Dendritic cell treated with granulocyte-macrophage colony-stimulating factor and Interleukin-4, amounts not matched to agents 40 ng/mL and 50 ng/mL, for 4 days (primary cell): ENCODE measurements at regions of chr3 and their contacts with region 1.

Region 1: DNA sequence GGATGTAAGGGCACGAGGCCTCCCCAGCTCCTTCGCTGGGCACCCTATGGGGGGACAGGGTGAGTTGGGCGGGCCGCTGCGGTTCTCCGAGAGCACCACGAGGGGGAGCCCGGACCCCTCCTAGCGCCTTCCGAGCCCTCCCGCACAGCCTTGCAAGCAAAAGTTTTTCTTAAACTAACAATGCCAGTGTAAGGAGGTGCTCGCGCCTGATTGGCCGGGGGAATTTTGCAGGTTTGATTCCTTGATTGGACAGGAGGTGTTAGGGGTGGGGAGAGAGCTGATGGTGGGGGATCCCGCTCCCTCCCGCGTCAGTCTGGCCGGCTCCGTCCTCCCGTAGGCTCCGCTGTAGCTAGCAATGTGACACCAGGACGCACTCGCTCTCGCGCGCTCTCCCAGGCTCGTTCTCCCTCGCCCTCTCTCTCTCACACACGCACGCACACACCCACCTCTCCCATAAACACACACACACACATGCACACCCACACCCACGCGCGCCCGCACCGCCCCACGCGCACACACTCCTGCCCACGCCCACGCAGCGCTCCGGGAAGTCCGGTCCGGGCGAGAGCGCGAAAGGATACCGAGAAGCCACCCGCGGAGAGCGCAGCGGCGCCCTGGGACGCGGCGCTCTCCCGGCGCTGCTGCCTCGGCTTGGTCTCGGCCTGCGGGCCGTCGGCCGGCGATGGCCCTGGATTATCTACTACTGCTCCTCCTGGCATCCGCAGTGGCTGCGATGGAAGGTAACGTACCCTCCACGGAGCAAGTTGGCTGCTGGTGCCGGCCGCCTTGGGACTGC is at the start of gene EPHB1:
- H3K4me3 Mint-ChIP-seq: peak within 1 kb of the TSS; percentile 75
- H3K27ac Mint-ChIP-seq: no peak within 1 kb of the TSS
- H3K4me1 Mint-ChIP-seq: peaks cover 17% of the 10 kb centered on the region
- H3K27me3 Mint-ChIP-seq: peaks cover 60% of the 10 kb centered on the region

Region 2: DNA sequence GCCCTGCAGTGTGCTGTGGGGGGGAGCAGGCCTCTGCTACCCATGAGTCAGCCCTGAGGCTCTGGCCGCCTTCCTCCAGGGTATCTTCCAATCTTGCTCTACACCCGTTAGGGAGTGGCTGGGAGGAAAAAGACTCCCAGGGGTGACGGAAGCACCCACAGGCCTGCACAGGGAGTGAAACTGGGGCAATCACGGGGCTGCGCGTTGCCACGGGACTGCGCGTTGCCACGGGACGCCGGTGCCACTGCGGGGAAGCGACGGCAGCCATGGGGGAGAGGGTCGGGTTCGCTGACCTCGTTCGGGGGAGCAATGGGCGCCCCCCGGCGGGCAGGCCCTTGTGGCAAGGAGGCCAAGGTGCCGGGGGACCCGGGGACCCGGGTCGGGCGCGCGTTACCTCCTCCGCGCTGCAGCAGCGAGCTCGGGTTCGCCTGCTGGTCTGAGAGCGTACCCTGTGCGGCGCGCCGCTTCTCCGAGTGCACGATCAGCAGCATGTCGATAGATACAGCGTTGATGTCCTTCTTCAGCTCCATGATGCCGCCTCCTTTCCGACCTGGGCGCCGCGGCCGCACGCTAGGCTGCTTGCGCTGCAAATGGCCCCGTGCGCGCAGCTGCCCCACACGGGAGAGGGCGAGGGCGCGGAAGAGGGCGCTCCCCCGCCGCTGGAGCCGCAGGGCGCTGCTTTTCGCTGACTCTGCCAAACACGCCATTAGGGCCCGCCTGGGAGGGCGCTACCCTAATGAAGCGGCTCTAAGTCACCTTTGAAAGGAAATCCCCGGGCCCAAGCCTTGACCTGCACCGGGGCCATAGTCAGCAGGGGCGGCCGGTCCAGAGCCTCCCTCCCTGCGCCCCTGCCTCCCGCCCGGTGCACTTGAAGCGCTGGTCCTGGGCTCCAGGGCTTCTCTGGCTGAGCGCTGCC is 144.5 kb before region 1 on chr3 and contains the start of gene KY:
- intact Hi-C with region 1: no loop called
- H3K4me3 Mint-ChIP-seq: peak within 1 kb of the TSS; percentile 66
- H3K27ac Mint-ChIP-seq: no peak within 1 kb of the TSS
- H3K4me1 Mint-ChIP-seq: peaks cover 10% of the 10 kb centered on the region
- H3K27me3 Mint-ChIP-seq: peaks cover 30% of the 10 kb centered on the region

Region 3: DNA sequence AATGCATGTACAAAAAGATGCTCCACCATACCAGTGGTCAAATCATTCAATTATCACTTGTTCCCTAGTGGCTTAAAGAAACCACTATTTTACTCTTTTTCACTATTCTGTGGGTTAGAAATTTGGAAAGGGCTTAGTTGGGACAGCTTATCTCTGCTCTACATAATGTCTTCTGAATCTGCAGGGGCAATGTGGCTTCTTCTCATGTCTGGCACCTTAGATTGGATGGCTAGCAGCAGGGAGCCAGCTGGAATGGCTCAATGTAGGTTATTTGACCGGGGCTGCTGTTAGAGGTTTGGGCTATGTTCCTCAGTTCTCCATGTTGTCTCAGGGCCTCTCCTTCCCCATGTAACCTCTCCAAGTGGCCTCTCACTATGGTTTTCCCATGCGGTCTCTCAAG is 57.6 kb before region 1 on chr3:
- intact Hi-C with region 1: no loop called
- H3K4me3 Mint-ChIP-seq: no peak overlapping the region
- H3K27ac Mint-ChIP-seq: no peak overlapping the region
- H3K4me1 Mint-ChIP-seq: no peaks in the 10 kb centered on the region
- H3K27me3 Mint-ChIP-seq: no peaks in the 10 kb centered on the region

Region 4: DNA sequence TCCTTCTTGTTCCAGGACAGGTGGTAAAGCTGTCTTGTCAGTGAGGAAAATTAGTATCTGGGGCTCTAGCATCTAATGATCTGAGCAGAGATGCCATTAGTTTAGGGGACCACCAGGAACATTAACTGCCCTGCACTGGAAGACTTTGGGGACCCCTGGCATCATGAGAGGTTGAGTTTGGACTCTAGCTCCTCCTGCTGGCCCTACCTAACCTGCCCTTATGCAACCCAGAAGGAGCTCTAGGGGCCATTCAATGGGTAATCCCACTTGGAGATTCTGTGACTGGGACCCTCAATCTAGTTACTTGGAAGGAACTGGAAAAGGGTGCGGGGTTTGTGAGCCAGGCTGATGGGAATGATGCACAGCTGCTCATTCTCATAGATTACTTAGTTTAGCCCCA is 450.9 kb after region 1 on chr3:
- intact Hi-C with region 1: loop called (anchors 2 kb)
- H3K4me3 Mint-ChIP-seq: no peak overlapping the region
- H3K27ac Mint-ChIP-seq: no peak overlapping the region
- H3K4me1 Mint-ChIP-seq: no peaks in the 10 kb centered on the region
- H3K27me3 Mint-ChIP-seq: no peaks in the 10 kb centered on the region

Region 5: GRCh38 chr3:135503760-135504686 is 708.9 kb after region 1 on chr3:
- intact Hi-C with region 1: loop called (anchors 2 kb)
- H3K4me3 Mint-ChIP-seq: no peak overlapping the region
- H3K27ac Mint-ChIP-seq: no peak overlapping the region
- H3K4me1 Mint-ChIP-seq: peaks cover 7% of the 10 kb centered on the region
- H3K27me3 Mint-ChIP-seq: peaks cover 5% of the 10 kb centered on the region

Region 6: DNA sequence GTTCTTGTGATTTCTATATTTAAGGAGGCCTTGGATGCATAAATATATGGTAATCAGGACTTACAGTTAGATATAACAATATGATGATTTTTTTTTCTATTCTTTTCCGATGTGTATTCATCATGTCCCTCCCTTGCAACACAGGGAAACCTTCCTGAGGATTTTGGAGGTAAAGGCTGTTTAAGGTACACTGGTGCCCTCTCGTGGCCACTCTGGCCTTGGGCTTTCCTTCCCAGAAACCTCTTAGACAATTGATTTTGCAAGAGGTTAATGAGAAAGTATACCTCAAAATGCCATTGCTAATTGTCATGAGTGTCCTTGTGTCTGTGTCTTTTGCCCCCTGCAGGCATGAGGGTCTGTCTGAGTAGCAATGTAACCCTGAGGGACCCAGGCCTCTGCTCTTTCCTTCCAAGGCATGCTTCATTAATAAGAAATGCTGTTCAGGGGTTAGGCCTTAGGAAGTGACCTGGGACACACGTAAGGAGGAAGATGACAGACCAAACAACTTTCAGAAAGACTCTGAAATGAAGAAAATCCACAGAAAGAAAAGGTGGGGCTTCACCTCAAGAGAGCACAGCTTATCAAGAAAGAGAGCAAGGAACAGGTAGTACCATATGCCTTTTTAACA is 1100.1 kb after region 1 on chr3:
- intact Hi-C with region 1: loop called (anchors 1 kb)
- H3K4me3 Mint-ChIP-seq: no peak overlapping the region
- H3K27ac Mint-ChIP-seq: no peak overlapping the region
- H3K4me1 Mint-ChIP-seq: no peaks in the 10 kb centered on the region
- H3K27me3 Mint-ChIP-seq: no peaks in the 10 kb centered on the region